ENCODE measurements at regions of chr1 and their contacts with region 1.

Region 1: DNA sequence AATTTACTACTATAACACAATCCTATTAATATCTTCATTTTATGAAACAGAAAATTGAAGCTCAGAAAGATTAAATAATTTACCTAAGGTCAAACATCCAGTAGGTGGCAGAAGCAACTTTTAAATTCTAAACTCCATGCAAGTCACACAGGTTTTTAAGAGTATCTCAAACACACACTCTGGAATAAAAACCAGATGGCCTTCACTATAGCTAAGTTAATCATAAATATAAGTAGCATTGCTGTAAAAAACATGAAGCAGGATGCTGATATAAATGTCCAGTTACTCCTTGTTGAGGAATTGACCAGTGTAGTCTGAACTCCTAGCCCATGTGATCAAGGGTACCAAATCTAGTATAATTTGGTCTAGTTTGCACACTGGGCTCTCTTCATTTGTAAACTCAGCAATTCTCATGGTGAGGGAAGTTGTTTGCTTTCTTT is 9.4 kb upstream of the FMO3 start:
- DNase-seq: peak; percentile 9
- H3K4me3 ChIP-seq: no peak overlapping the region
- H3K27ac ChIP-seq: no peak overlapping the region
- H3K4me1 ChIP-seq: no peaks in the 10 kb centered on the region
- H3K27me3 ChIP-seq: no peaks in the 10 kb centered on the region
- CTCF ChIP-seq: peak; percentile 23 to 50

Region 2: GRCh38 chr1:170959385-170959784 is 121.9 kb before region 1 on chr1:
- CTCF ChIA-PET with region 1: interaction called, 12 read pairs
- dilution Hi-C with region 1: no loop called
- in situ Hi-C with region 1: no loop called
- intact Hi-C with region 1: no loop called
- DNase-seq: peak; percentile 59
- H3K4me3 ChIP-seq: no peak overlapping the region
- H3K27ac ChIP-seq: peak overlapping the region; percentile 7
- H3K4me1 ChIP-seq: peaks cover 14% of the 10 kb centered on the region
- H3K27me3 ChIP-seq: no peaks in the 10 kb centered on the region
- CTCF ChIP-seq: no peak

Region 3: DNA sequence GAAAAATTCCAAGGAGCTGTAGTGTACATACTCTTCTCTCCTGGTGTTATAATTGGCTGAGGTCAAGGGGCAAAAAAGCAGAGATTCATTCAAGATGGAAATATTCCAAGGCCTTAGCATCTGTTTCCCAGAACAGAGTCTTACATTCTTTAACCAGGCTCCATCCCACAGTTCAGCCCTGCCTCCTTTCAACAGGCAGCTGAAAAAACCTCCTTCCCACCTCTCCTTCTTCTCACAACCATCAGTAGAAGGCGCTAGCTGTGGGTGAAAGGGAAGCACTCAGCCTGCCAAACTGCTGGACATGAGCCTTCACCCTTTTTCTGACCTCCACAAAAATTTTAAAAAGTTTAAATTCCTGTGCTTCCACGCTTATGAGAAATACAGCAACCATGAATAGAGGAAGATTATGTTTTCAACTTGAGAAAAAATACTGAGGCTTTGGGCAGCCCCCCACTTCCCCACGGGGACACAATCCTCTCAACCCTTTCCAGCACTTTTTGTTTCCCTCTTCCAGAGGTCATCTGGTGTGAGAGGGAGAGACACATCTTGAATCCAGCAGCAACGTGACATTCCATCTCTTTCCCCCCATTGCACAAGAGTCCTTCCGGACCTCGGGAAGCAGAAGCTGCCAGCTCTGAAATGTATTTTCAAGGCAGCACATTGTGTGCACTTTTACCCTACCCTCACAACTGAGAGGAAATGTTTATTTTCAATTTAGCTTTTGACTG is 60.5 kb after region 1 on chr1:
- CTCF ChIA-PET with region 1: interaction called, 5 read pairs
- dilution Hi-C with region 1: loop called (anchors 5 kb)
- in situ Hi-C with region 1: no loop called
- intact Hi-C with region 1: no loop called
- DNase-seq: no peak
- H3K4me3 ChIP-seq: no peak overlapping the region
- H3K27ac ChIP-seq: no peak overlapping the region
- H3K4me1 ChIP-seq: no peaks in the 10 kb centered on the region
- H3K27me3 ChIP-seq: no peaks in the 10 kb centered on the region
- CTCF ChIP-seq: peak in 1 of 2 donors; percentile 12

Region 4: GRCh38 chr1:171188388-171189266 is 107.3 kb after region 1 on chr1:
- CTCF ChIA-PET with region 1: no interaction called
- dilution Hi-C with region 1: no loop called
- in situ Hi-C with region 1: no loop called
- intact Hi-C with region 1: loop called (anchors 1 kb)
- DNase-seq: peak; percentile 16
- H3K4me3 ChIP-seq: no peak overlapping the region
- H3K27ac ChIP-seq: no peak overlapping the region
- H3K4me1 ChIP-seq: no peaks in the 10 kb centered on the region
- H3K27me3 ChIP-seq: no peaks in the 10 kb centered on the region
- CTCF ChIP-seq: peak; percentile 67 to 74

Region 5: GRCh38 chr1:171226747-171227370 is 145.5 kb after region 1 on chr1:
- CTCF ChIA-PET with region 1: interaction called, 8 read pairs
- dilution Hi-C with region 1: no loop called
- in situ Hi-C with region 1: loop called (anchors 10 kb)
- intact Hi-C with region 1: loop called (anchors 1 kb)
- DNase-seq: peak; percentile 55
- H3K4me3 ChIP-seq: no peak overlapping the region
- H3K27ac ChIP-seq: no peak overlapping the region
- H3K4me1 ChIP-seq: peaks cover 20% of the 10 kb centered on the region
- H3K27me3 ChIP-seq: no peaks in the 10 kb centered on the region
- CTCF ChIP-seq: peak; percentile 53 to 86

Region 6: DNA sequence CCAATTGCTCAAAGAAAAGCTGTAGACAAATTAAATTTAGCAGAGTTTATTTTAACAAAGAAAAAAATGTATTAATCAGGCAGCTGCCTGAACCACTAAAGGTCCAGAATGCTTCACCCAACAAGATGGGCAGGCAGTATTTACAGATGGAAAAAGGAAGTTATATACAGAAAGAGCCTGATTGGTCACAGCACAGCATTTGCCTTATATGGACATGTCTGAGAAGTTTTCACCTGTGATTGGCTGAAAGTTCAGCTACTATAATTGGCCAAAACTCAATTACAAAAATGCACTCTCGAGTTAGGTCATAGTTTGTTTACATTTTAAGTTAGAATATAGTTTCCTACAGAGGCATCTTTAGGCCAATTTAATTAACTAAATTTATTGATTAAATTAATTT is 151.9 kb after region 1 on chr1:
- CTCF ChIA-PET with region 1: no interaction called
- dilution Hi-C with region 1: no loop called
- in situ Hi-C with region 1: loop called (anchors 10 kb)
- intact Hi-C with region 1: no loop called
- DNase-seq: no peak
- H3K4me3 ChIP-seq: no peak overlapping the region
- H3K27ac ChIP-seq: no peak overlapping the region
- H3K4me1 ChIP-seq: no peaks in the 10 kb centered on the region
- H3K27me3 ChIP-seq: no peaks in the 10 kb centered on the region
- CTCF ChIP-seq: no peak

Measured in mammary epithelial cell (primary cell).